Activated T-helper 2 cell treated with anti-CD3 and anti-CD28 coated beads, Interferon-gamma antibody, Interleukin-2, Interleukin-4, amounts not matched to agents 10 μg/mL and 5 μg/mL and 100 μg/mL, durations not matched to agents 14 hours and 24 hours and 36 hours (primary cell): ENCODE measurements at regions of chr4 and their contacts with region 1.

Region 1: DNA sequence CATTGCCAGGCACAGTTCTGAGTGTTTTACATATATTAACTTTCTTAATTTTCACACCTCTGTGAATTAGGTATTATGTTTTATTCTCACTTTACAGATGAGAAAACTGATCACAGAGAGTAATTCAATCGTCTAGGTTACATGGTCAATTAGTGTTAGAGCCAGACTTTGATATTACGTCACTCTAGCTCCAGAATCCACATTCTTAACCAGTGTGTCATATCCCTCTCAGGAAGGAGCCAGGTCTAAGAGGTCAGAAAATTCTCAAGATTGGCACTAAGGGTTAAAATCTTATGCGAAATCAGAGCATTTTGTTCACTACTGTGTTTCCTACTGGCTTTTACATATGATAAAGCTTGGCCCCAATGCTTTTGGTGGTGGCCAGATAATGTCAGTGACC is 7.4 kb downstream of the DMP1 start:
- DNase-seq: no peak
- H3K4me3 Mint-ChIP-seq: no peak overlapping the region
- H3K27ac Mint-ChIP-seq: no peak overlapping the region
- H3K4me1 Mint-ChIP-seq: no peaks in the 10 kb centered on the region
- H3K27me3 Mint-ChIP-seq: no peaks in the 10 kb centered on the region

Region 2: GRCh38 chr4:87543835-87544461 is 113.6 kb before region 1 on chr4:
- intact Hi-C with region 1: loop called (anchors 10 kb)
- DNase-seq: no peak
- H3K4me3 Mint-ChIP-seq: no peak overlapping the region
- H3K27ac Mint-ChIP-seq: no peak overlapping the region
- H3K4me1 Mint-ChIP-seq: no peaks in the 10 kb centered on the region
- H3K27me3 Mint-ChIP-seq: peaks cover 7% of the 10 kb centered on the region